Dendritic cell treated with granulocyte-macrophage colony-stimulating factor and Interleukin-4, amounts not matched to agents 40 ng/mL and 50 ng/mL, for 4 days (primary cell): ENCODE measurements at regions of chr21 and their contacts with region 1.

Region 1: DNA sequence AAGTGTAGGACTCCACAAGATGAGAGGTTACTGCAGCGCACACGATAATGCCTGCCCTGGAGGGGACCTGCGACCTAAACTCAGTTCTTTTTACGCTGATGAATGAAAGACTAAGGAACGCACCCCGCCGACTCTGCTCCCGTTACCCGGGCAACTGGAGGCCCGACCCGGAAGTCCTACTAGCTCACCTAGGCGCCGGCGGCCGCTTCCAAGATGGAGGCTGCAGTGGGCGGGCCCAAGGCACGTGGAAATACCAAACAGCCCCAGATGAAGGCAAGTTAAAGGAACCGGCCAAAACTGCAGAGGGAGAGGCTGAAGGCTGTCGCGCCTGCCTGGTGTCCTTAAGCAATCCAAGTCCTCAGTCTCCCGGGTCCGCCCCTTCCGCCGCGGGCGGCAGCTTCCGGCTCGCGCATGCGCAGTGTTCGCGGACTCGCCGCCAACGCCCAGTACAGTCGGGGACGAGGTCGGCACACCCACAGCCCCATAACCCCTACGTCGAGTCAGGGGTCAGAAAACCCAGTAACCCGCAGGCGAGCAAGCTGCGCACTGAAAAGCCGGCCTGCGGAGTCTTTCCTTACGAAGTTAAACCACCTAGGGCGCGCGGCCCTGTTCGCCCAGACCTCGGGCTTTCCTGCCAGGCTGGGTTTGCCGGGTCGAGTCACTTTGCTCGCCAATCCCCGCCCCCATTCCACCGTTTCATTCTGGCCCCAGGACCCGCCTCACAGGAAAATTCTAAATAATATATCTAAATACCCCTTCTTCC is at the start of gene SETD4:
- H3K4me3 Mint-ChIP-seq: peak within 1 kb of the TSS; percentile 86
- H3K27ac Mint-ChIP-seq: peak within 1 kb of the TSS; percentile 95
- H3K4me1 Mint-ChIP-seq: peaks cover under 1% of the 10 kb centered on the region
- H3K27me3 Mint-ChIP-seq: no peaks in the 10 kb centered on the region

Region 2: DNA sequence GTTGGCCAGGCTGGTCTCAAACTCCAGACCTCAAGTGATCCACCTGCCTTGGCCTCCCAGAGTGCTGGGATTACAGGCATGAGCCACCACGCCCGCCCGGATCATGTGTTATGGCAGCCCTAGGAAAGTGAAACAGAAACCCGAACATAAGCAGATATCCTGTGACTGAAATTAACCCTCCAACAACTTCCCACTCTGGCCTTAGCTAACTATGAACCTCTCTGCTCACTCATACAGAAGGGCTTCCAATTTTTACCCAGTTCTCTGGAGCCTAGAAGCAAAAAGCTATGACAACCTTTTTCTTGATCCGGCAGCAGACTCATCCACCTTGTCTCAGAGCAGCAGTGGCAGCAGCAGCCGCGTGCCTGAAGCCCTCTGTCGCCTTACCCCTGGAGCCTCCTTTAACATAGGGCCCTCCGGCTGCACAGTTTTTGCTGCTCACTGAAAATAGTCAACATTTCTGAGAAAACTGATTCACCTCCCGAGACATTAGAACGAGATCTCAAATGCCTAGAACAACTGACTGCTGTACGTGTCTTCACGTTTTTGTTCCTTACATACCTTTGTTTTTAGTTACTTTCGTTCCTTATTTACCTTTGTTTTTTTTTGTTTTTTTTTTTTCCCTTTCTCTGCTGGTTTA is 18.8 kb after region 1 on chr21:
- intact Hi-C with region 1: loop called (anchors 2 kb)
- H3K4me3 Mint-ChIP-seq: peak overlapping the region; percentile 61
- H3K27ac Mint-ChIP-seq: peak overlapping the region; percentile 90
- H3K4me1 Mint-ChIP-seq: peaks cover 44% of the 10 kb centered on the region
- H3K27me3 Mint-ChIP-seq: no peaks in the 10 kb centered on the region